ENCODE measurements at regions of chr17 and their contacts with region 1.

Region 1: GRCh38 chr17:30203471-30203981 is 32.0 kb downstream of the SLC6A4 start:
- DNase-seq: no peak
- H3K4me3 ChIP-seq: no peak overlapping the region
- H3K27ac ChIP-seq: no peak overlapping the region
- H3K4me1 ChIP-seq: no peaks in the 10 kb centered on the region
- H3K27me3 ChIP-seq: no peaks in the 10 kb centered on the region
- CTCF ChIP-seq: 0 out of 2 replicates have a peak, but pooled peaks have one; percentile 13

Region 2: GRCh38 chr17:30173649-30174048 is 29.9 kb before region 1 on chr17:
- CTCF ChIA-PET with region 1: no interaction called
- POLR2A ChIA-PET with region 1: interaction called, 15 read pairs
- intact Hi-C with region 1: no loop called
- DNase-seq: no peak
- H3K4me3 ChIP-seq: no peak overlapping the region
- H3K27ac ChIP-seq: no peak overlapping the region
- H3K4me1 ChIP-seq: no peaks in the 10 kb centered on the region
- H3K27me3 ChIP-seq: no peaks in the 10 kb centered on the region
- CTCF ChIP-seq: no peak

Region 3: GRCh38 chr17:30187573-30187972 is 16.0 kb before region 1 on chr17:
- CTCF ChIA-PET with region 1: no interaction called
- POLR2A ChIA-PET with region 1: no interaction called
- intact Hi-C with region 1: loop called (anchors 2 kb)
- DNase-seq: no peak
- H3K4me3 ChIP-seq: no peak overlapping the region
- H3K27ac ChIP-seq: no peak overlapping the region
- H3K4me1 ChIP-seq: no peaks in the 10 kb centered on the region
- H3K27me3 ChIP-seq: no peaks in the 10 kb centered on the region
- CTCF ChIP-seq: no peak